ENCODE measurements at regions of chr12 and their contacts with region 1.

Region 1: DNA sequence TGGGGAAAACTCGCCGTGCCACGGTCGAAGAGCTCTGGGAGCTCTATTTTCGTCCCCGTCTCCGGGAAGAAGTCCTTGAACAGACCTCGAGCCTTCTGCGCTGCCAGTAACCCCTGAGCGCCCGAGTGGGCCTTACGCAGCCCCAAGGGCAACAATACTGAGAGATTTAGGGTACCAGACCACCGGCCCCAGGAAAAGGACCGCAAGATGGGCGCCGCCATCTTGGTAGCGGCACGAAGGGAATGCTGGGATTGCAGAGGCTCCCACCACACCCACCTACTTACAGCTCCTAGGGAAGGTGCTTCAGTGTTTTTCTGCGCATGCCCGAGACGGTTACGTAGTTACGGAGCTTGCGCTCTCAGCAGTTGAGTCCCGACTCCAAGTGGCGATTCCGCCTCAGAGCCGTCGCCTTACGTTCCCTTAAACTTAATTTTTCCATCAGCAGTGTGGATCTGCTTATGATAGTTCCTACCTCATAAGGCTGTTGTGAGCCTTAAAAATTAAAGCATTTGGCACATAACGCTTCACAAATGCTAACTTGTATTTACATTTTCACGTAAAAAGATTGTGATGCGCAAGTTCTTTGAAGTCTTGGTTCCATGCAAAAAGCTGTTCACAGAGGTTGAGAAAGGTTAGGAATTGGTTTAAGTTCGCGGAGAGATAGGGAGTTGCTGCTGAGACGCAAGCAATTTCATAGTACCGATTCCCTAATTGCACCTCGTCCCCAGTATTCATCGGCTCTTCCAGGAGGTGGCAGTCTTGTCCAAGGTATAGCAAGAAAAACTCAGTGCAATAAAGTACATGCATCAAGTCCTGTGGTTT is at the start of gene YARS2:
- DNase-seq: peak; percentile 96
- H3K4me3 ChIP-seq: peak within 1 kb of the TSS; percentile 75
- H3K27ac ChIP-seq: peak within 1 kb of the TSS; percentile 91
- H3K27me3 ChIP-seq: no peaks in the 10 kb centered on the region
- CTCF ChIP-seq: peak; percentile 83
- polyA plus RNA-seq, gene YARS2: 20.5 and 27.3 TPM in 2 replicates

Region 2: DNA sequence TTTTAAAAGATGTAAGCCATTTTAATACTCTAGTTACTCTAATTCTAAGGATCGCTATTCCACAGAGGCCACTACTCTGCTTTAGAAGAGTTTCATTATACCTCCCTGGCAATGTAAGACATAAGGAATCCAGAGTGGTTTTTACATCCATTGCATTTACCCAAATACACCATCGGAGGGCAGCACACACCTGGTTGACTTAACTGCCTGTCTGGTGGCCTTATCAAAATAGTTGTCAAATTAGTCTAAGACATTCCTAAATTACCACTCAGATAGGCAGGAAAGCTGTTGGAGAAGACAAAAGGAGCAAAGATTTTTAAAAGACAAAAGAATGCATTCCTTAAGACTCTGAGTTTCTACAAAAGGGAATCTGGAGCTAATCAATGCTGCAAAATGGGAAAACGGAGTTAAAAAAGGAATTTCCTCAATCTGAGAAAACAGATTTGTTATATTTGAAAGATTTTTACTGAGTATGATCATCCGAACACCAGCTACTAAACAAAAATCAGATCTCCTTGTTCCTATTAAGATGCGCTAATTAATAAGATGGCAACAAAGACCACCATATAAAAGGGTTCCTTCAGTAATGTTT is 390.3 kb before region 1 on chr12:
- CTCF ChIA-PET with region 1: interaction called, 13 read pairs
- POLR2A ChIA-PET with region 1: no interaction called
- DNase-seq: peak; percentile 47
- H3K4me3 ChIP-seq: no peak overlapping the region
- H3K27ac ChIP-seq: no peak overlapping the region
- H3K27me3 ChIP-seq: no peaks in the 10 kb centered on the region
- CTCF ChIP-seq: peak; percentile 80

Region 3: GRCh38 chr12:32743264-32743663 is 12.6 kb before region 1 on chr12:
- CTCF ChIA-PET with region 1: interaction called, 16 read pairs
- POLR2A ChIA-PET with region 1: no interaction called
- DNase-seq: no peak
- H3K4me3 ChIP-seq: no peak overlapping the region
- H3K27ac ChIP-seq: no peak overlapping the region
- H3K27me3 ChIP-seq: no peaks in the 10 kb centered on the region
- CTCF ChIP-seq: no peak

Region 4: GRCh38 chr12:34016361-34016760 is 1260.5 kb after region 1 on chr12:
- CTCF ChIA-PET with region 1: interaction called, 174 read pairs
- POLR2A ChIA-PET with region 1: interaction called, 28 read pairs
- DNase-seq: no peak
- H3K4me3 ChIP-seq: no peak overlapping the region
- H3K27ac ChIP-seq: no peak overlapping the region
- H3K27me3 ChIP-seq: no peaks in the 10 kb centered on the region
- CTCF ChIP-seq: no peak

Region 5: GRCh38 chr12:34033628-34034282 is 1277.9 kb after region 1 on chr12:
- CTCF ChIA-PET with region 1: interaction called, 19 read pairs
- POLR2A ChIA-PET with region 1: no interaction called
- DNase-seq: peak; percentile 2
- H3K4me3 ChIP-seq: no peak overlapping the region
- H3K27ac ChIP-seq: no peak overlapping the region
- H3K27me3 ChIP-seq: no peaks in the 10 kb centered on the region
- CTCF ChIP-seq: peak; percentile 59

Measured in AG04450 (cell line).